Dendritic cell treated with granulocyte-macrophage colony-stimulating factor and Interleukin-4, amounts not matched to agents 40 ng/mL and 50 ng/mL, for 4 days (primary cell): ENCODE measurements at regions of chr2 and their contacts with region 1.

Region 1: DNA sequence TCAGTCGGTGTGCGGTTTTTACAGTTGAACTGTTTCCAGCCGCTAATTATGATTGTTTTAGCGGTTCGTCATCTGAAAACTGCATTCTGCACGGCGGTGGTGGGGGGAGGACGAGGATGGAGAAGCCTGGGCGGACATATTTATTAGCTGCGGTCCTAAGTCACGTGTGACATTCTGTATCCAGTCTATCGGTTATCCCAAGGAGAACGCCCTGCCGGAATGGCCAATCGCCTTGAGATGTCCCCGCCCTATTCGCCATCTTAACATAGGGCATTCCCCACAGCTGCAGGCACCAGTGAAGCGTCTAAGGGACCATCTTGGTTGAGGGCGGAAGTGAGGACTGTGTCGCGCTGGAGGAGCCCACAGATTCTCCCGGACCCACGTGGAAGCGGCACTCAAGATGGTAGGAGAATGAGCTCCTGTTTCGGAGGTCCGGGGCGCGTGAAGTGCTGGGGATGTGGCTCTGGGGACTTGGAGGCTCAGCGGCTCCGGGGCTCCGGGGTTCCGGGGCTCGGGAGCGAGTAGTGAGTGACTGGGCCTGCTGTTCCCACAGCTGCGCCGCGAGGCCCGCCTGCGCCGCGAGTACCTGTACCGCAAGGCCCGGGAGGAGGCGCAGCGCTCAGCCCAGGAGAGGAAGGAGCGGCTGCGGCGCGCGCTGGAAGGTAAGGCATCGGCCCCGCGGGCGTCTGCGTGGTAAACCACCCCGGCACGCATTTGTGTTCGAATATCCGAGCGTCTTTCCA is at the start of gene IMP4:
- H3K4me3 Mint-ChIP-seq: peak within 1 kb of the TSS; percentile 100
- H3K27ac Mint-ChIP-seq: peak within 1 kb of the TSS; percentile 100
- H3K4me1 Mint-ChIP-seq: peaks cover 48% of the 10 kb centered on the region
- H3K27me3 Mint-ChIP-seq: no peaks in the 10 kb centered on the region

Region 2: DNA sequence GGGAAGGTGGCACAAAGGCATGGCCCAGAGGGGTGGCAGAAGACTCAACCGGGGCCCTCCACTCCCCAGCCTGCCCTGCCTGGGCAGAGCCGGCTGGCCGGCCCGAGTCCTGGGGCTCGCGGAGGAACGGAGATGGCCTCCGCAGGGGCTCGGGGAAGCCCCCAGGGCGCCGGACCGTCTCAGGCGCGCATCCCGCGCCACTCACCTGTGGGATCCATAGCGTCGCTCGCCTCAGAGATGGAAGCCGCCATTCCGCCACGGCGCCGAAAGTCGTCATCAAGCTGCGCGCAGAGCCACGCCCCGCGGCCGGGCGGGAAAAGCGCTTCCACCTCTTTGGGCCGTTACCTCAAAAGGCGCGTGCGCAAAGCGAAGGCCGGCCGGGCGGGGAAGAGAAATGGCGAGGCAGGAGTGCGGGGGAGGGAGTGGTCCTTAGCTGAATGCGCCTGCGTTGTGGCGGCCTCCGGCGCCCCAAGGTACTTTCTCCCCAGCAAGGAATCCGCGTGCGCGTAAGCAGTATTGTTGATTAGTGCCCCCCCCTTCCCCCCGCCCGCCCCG is 161.3 kb before region 1 on chr2 and contains the start of gene SMPD4:
- intact Hi-C with region 1: loop called (anchors 1 kb)
- H3K4me3 Mint-ChIP-seq: peak within 1 kb of the TSS; percentile 90
- H3K27ac Mint-ChIP-seq: peak within 1 kb of the TSS; percentile 90
- H3K4me1 Mint-ChIP-seq: peaks cover 38% of the 10 kb centered on the region
- H3K27me3 Mint-ChIP-seq: no peaks in the 10 kb centered on the region

Region 3: GRCh38 chr2:130355578-130356431 is 13.1 kb after region 1 on chr2 and contains the start of gene PTPN18:
- intact Hi-C with region 1: loop called (anchors 1 kb)
- H3K4me3 Mint-ChIP-seq: peak within 1 kb of the TSS; percentile 93
- H3K27ac Mint-ChIP-seq: peak within 1 kb of the TSS; percentile 94
- H3K4me1 Mint-ChIP-seq: peaks cover 68% of the 10 kb centered on the region
- H3K27me3 Mint-ChIP-seq: no peaks in the 10 kb centered on the region

Region 4: GRCh38 chr2:130372055-130372832 is 29.5 kb after region 1 on chr2:
- intact Hi-C with region 1: loop called (anchors 1 kb)
- H3K4me3 Mint-ChIP-seq: peak overlapping the region; percentile 95
- H3K27ac Mint-ChIP-seq: peak overlapping the region; percentile 98
- H3K4me1 Mint-ChIP-seq: peaks cover 90% of the 10 kb centered on the region
- H3K27me3 Mint-ChIP-seq: no peaks in the 10 kb centered on the region

Region 5: GRCh38 chr2:130391058-130391871 is 48.6 kb after region 1 on chr2:
- intact Hi-C with region 1: loop called (anchors 1 kb)
- H3K4me3 Mint-ChIP-seq: peak overlapping the region; percentile 85
- H3K27ac Mint-ChIP-seq: peak overlapping the region; percentile 98
- H3K4me1 Mint-ChIP-seq: peaks cover 63% of the 10 kb centered on the region
- H3K27me3 Mint-ChIP-seq: no peaks in the 10 kb centered on the region